ENCODE measurements at regions of chr11 and their contacts with region 1.

Region 1: DNA sequence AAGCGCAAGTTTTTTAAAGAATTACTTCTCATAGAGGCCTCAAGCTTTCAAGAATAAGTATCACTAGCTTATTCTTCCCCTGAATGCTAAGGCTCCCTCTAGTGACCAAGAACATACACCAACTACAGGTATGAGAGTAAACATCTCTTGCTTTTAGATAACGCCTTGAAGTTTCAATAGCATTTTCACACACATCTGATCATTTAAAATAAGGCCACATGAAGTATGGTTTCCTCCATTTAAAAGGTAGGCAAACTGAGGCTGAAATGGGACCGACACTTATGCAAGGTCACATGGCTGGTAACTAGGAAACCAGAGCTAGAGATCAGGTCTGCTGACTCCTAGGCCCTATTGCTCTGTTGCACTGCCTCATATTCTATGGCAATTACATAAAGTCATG is 66.5 kb downstream of the CCDC34 start:
- DNase-seq: peak; percentile 69
- H3K4me3 Mint-ChIP-seq: no peak overlapping the region
- H3K27ac Mint-ChIP-seq: no peak overlapping the region
- H3K4me1 Mint-ChIP-seq: peaks cover 3% of the 10 kb centered on the region
- H3K27me3 Mint-ChIP-seq: no peaks in the 10 kb centered on the region
- CTCF ChIP-seq: peak; percentile 56

Region 2: DNA sequence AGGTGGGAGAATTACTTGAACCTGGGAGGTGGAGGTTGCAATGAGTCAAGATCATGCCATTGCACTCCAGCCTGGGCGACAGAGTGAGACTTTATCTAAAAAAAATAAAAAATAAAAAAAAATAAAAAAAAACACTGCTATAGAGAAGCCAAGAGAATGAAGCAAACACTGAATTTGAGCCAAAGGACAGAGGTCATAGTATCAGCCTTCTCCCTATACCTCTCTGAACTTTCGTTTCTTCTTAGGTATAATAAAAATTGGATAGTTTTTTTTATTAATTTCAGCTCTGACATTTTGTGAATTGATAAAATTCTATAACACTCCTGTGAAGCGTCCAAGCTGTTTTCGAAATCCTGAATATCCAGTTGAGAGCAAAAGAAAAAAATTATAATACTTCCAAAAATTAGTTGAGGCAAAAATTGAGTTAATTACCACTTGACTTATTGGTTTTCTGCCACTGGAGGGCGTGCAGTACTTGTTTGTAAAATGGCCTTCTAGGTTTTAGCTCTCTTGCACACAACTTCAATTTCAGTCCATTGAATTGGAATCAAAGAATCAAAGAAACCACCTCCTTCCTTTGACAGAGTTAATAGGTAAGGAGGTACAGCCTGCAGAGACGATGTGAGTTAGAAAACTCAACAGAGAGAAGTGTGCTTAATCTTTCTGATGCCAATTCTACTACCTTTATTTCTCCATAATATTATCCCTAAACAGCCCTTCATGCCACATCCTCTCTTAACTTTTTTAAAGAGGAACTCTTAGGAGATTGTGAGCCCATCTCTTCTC is 112.6 kb before region 1 on chr11:
- CTCF ChIA-PET with region 1: interaction called, 115 read pairs
- POLR2A ChIA-PET with region 1: interaction called, 8 read pairs
- intact Hi-C with region 1: loop called (anchors 1 kb)
- DNase-seq: peak; percentile 72
- H3K4me3 Mint-ChIP-seq: no peak overlapping the region
- H3K27ac Mint-ChIP-seq: no peak overlapping the region
- H3K4me1 Mint-ChIP-seq: no peaks in the 10 kb centered on the region
- H3K27me3 Mint-ChIP-seq: peaks cover 27% of the 10 kb centered on the region
- CTCF ChIP-seq: peak; percentile 78

Region 3: DNA sequence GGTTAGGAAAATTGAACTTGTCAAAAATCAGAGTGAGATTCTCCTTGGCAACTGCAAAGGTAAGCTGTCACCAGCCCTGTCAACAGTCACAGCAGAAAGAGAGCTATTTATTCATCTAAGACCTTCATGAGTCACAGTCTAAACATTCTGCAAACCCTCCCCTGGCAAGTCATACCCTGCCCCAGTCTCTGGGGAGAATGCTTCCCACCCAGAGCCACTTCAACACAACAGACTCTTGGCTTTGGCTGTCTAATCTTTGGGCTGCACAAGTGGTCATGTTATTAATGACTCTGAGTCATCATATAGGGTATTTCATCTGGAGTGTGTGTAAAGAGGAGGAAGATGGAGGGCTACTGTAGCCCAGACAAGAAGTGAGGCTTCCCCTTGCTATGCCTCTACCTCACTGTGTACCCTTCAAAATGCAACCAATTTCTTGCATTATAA is 86.9 kb before region 1 on chr11:
- CTCF ChIA-PET with region 1: interaction called, 33 read pairs
- POLR2A ChIA-PET with region 1: interaction called, 5 read pairs
- intact Hi-C with region 1: loop called (anchors 1 kb)
- DNase-seq: peak; percentile 94
- H3K4me3 Mint-ChIP-seq: no peak overlapping the region
- H3K27ac Mint-ChIP-seq: peak overlapping the region; percentile 74
- H3K4me1 Mint-ChIP-seq: peaks cover 37% of the 10 kb centered on the region
- H3K27me3 Mint-ChIP-seq: no peaks in the 10 kb centered on the region
- CTCF ChIP-seq: no peak

Region 4: GRCh38 chr11:27241311-27242122 is 55.0 kb before region 1 on chr11:
- CTCF ChIA-PET with region 1: interaction called, 11 read pairs
- POLR2A ChIA-PET with region 1: interaction called, 3 read pairs
- intact Hi-C with region 1: no loop called
- DNase-seq: peak; percentile 42
- H3K4me3 Mint-ChIP-seq: no peak overlapping the region
- H3K27ac Mint-ChIP-seq: no peak overlapping the region
- H3K4me1 Mint-ChIP-seq: no peaks in the 10 kb centered on the region
- H3K27me3 Mint-ChIP-seq: no peaks in the 10 kb centered on the region
- CTCF ChIP-seq: no peak

Region 5: DNA sequence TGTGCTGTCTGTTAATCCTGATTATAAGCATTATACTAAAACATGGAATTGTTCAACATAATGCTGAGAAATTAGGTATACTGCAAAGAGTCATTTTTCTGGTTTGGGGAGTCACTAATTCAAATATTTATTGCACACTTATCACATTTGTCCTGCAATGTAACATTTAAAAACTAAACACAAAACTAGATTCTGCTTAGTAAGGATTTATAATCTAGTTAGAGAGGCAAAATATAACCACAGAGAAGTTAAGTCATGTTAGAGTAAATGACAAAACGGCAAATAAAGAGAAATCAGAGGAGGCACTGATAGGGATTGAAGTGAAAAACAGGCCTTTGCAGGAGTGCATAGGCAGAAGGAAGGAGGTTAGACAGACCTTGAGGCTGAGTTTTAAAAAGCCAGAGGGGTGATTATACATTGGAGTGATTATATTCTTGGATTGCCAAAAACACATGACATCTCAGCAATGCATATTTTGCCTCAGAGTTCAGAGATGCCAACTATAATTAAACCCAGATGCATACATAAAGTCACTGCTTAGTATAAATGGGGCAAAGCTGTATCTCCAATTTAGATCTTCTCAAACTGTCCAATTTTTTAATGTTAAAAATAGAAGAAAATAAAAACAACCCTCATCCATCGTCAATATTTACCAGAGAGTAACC is 16.8 kb after region 1 on chr11:
- CTCF ChIA-PET with region 1: interaction called, 51 read pairs
- POLR2A ChIA-PET with region 1: interaction called, 3 read pairs
- intact Hi-C with region 1: no loop called
- DNase-seq: no peak
- H3K4me3 Mint-ChIP-seq: no peak overlapping the region
- H3K27ac Mint-ChIP-seq: no peak overlapping the region
- H3K4me1 Mint-ChIP-seq: no peaks in the 10 kb centered on the region
- H3K27me3 Mint-ChIP-seq: no peaks in the 10 kb centered on the region
- CTCF ChIP-seq: no peak